Activated T-helper 1 cell treated with anti-CD3 and anti-CD28 coated beads, Interleukin-12 subunit alpha, Interleukin-12 subunit beta, Interleukin-2, Interleukin-4 antibody, amounts not matched to agents 30 ng/mL and 10 ng/mL and 1 ng/mL, durations not matched to agents 14 hours and 24 hours and 36 hours (primary cell): ENCODE measurements at regions of chr17 and their contacts with region 1.

Region 1: DNA sequence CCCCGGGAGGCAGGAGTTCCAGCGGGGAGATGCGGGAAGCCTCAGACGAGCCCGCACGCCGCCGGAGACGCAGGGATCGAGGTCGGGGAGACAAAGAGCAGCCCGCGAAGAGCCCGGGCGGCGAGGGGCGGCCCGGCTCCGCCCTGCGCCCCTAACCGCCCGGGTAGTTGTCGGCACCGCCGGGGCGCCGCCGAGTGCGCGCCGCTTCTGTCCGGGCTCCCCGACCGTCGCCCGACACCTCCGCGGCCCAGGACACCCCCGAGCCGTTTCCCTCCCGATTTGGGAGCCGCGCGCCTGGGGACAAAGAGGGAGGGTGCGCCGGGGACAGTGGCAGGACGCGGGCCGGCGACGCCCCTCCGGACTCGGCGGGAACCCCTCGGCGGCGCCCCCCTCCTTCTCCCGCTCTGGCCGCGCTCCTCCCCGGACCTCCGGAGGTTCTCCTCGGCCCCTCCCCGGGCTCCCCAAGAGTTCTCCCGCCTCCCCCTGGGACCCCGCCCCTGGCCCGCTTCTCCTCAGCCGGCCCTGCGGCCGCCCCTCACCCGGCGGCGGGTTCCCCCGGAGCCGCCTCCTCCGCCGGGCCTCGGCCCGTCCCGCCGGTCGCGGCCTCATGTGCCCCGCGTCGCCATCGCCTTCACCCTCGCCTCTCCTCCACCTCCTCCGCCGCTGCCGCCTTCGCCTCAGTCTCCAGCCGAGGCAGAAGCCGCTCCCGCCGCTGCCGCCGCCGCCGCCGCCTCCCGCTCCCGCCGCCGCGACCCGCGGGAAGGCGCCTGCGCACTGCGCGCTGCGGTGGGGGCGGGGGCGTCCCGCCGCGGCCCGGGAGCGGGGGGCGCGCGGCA is at the start of gene GJC1:
- DNase-seq: no peak
- H3K4me3 Mint-ChIP-seq: peak within 1 kb of the TSS; percentile 82
- H3K27ac Mint-ChIP-seq: peak within 1 kb of the TSS; percentile 44
- H3K4me1 Mint-ChIP-seq: peaks cover 7% of the 10 kb centered on the region
- H3K27me3 Mint-ChIP-seq: peaks cover 62% of the 10 kb centered on the region
- total RNA-seq, gene GJC1: 4.7 and 5.7 TPM in 2 replicates

Region 2: DNA sequence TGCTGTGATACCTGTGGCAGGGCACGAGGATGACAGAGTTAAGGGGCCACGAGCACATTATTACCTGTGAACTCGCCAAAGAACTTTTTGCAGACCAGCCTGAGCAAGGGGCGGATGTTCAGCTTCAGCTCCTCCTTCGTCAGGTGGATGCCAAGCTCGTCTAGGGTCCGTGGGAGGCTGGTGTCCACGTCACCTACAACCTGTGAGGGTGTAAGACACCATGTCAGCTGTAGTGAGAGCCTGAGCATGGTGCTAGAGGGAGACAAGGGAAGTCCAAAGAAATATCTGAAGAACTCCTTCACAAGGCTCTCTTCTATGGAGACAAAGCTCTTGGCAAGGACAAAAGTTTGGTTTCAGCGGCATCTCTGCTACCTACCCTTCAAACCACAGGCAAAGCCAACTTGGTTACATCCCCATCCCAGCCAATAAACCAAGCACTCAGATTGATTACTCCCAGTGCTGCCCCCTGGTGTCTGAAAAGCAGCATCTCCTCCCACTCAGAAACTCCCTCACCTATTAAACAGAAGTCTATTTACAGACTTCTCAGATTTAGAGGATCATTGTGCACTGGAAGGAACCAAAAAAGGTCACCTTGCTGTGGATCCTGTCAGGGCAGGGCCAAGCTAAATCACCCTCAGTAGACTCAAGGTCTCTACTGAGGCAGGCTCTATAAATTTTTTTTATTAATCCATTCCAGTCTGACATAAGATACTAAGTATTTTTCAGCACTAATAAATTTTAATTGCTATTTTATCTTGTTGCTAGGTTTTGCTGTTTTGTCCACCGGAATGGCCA is 35.3 kb after region 1 on chr17:
- intact Hi-C with region 1: loop called (anchors 2 kb)
- DNase-seq: peak; percentile 45
- H3K4me3 Mint-ChIP-seq: no peak overlapping the region
- H3K27ac Mint-ChIP-seq: no peak overlapping the region
- H3K4me1 Mint-ChIP-seq: no peaks in the 10 kb centered on the region
- H3K27me3 Mint-ChIP-seq: no peaks in the 10 kb centered on the region